ENCODE measurements at regions of chr20 and their contacts with region 1.

Region 1: DNA sequence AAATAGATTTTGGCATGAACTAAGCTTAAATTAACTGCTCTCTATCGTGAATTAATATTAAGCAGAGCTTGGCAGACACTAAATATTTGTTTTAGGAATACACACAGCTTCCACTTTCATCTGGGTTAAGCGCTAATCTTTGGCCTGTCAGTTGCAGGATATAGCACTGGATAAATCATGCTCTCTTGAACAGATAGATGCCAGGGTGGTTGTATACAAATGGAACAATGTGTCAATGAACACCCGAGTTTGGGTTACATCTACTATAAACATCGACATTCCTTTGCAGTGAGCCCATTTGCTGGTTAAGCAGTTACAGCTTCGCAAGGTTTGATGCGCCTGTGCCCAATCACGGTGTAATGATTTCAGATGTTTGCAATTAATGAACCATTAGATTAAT is 338.2 kb upstream of the ZFP64 start:
- DNase-seq: no peak
- ATAC-seq: no peak
- H3K4me3 ChIP-seq: no peak overlapping the region
- H3K27ac ChIP-seq: no peak overlapping the region
- H3K4me1 ChIP-seq: no peaks in the 10 kb centered on the region
- H3K27me3 ChIP-seq: no peaks in the 10 kb centered on the region
- CTCF ChIP-seq: no peak
- POLR2A ChIP-seq: no peak

Region 2: DNA sequence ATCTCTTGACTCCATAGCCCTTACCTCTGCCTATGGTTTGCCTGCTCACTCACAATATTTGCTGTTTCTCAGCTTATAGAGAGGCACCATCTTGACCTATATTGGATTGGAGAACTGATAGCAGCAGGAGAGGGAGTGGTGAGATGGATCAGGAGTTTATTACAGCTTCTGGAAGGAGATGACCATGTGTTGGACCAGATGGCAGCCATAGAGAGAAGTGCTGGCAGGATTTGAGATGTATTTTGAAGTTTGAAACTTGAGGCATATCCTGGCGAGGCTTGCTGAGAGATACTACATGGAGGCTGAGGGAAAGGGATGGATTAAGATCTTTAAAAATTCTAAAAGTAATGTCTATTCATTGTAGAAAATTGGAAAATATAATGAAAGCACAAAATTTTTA is 140.2 kb before region 1 on chr20:
- in situ Hi-C with region 1: no loop called
- intact Hi-C with region 1: loop called (anchors 5 kb)
- DNase-seq: no peak
- ATAC-seq: no peak
- H3K4me3 ChIP-seq: no peak overlapping the region
- H3K27ac ChIP-seq: no peak overlapping the region
- H3K4me1 ChIP-seq: no peaks in the 10 kb centered on the region
- H3K27me3 ChIP-seq: no peaks in the 10 kb centered on the region
- CTCF ChIP-seq: no peak
- POLR2A ChIP-seq: no peak

Measured in gastrocnemius medialis (tissue), 4 donors.